GM10248 (cell line): ENCODE measurements at regions of chr5 and their contacts with region 1.

Region 1: GRCh38 chr5:96187309-96188027 is 225.8 kb upstream of the ELL2 start:
- DNase-seq: no peak
- CTCF ChIP-seq: no peak

Region 2: DNA sequence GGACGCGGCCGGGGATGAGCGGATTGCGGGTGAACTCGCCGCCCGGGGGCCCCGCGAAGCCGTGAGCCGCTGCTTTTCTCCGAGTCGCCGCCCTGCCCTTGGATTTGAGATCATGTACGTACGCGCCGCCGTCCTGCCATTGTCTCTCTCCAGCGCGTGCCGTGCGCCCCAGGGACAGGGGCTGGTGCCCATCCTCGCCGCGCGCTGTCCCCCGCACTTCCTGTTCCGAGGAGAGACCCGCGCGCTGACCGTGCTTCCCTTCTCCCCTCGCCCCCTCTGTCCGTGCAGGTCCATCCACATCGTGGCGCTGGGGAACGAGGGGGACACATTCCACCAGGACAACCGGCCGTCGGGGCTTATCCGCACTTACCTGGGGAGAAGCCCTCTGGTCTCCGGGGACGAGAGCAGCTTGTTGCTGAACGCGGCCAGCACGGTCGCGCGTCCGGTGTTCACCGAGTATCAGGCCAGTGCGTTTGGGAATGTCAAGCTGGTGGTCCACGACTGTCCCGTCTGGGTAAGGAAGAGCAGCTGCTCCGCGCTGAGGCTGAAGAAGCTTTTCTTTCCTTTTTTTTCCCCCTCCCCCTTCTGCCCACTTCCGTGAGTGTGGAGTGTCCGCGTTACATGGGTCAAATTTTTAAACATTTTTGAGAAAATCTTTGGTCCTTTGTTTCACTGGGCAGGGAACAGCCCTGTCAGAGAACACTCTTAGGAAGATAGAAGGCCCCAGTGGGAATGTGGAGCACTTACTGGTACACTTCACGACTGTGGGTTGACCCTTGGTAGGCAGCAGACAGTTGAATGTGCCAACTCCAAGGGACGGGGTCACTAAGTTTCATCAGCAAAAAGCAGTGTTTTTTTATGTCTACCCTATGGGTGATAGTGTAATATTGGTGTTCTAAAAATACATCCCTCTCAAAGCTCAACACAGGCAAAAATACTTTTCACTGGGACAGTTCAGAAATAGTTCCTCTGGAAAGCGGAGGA is 455.6 kb before region 1 on chr5:
- CTCF ChIA-PET with region 1: no interaction called
- POLR2A ChIA-PET with region 1: no interaction called
- DNase-seq: peak; percentile 31
- CTCF ChIP-seq: no peak

Region 3: DNA sequence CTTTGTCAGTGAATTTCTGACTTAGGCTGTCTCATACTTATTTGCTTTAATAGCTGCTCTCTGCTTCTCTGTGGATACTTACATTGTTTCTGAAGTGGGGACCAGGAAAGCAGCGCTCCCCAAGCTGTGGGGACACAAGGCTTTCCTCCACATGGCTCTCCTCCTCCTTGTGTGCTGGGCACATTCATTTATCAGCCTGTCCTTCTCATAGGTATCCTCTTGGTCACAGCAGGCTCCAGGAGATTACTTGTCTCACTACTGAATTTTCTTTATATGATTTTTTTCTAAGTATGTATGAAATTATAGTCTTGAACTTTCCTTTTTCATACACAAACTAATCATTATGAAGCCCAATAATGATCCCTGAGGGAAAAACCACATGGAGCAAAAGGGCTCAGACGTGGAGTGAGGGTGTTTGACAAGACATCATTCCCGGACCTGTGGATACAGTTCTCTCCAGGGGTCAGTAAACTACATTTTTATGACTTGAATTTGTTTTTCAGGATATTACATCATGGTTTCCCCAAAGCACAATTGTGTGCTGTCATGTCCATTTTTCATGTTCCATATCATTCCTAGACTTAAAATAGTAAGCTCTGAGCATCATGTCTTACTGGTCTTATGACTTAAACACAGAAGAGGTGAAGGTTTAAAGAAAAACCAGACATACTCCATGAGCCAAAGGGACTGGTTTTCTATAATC is 11.0 kb after region 1 on chr5:
- CTCF ChIA-PET with region 1: interaction called, 10 read pairs
- POLR2A ChIA-PET with region 1: no interaction called
- DNase-seq: no peak
- CTCF ChIP-seq: no peak